HCT116 (cell line): ENCODE measurements at regions of chr4 and their contacts with region 1.

Region 1: DNA sequence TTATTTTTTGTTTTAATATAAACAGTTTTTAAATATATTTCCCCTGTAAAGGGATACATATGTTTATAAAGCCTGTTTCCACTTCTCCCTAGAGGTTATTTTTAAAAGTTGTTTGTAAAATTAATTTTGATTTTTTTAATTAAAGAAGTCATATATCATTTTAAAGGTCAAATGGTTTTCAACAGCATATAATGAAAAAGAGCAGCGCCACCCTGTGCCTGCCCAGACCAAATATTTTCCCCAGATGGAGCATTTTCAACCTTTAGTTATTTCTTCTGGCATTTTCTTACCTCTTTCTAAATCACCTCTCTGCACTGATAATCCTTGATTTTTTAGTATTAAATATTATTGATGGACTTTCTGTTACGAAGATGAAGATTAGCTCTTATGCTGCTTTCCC is 21.0 kb downstream of the MSX1 start:
- DNase-seq: no peak
- ATAC-seq: peak; percentile 54; the same call in 1 of the 2 replicates
- H3K4me3 ChIP-seq: no peak overlapping the region
- H3K27ac ChIP-seq: no peak overlapping the region
- H3K4me1 ChIP-seq: peaks cover 0 to 11% of the 10 kb centered on the region in 2 experiments; a peak in 1 of 4 replicates
- H3K27me3 ChIP-seq: no peaks in the 10 kb centered on the region
- CTCF ChIP-seq: peak; percentile 52 to 81 (median 57)
- POLR2A ChIP-seq: no peak
- RAD21 ChIP-seq: peak; percentile 75

Region 2: DNA sequence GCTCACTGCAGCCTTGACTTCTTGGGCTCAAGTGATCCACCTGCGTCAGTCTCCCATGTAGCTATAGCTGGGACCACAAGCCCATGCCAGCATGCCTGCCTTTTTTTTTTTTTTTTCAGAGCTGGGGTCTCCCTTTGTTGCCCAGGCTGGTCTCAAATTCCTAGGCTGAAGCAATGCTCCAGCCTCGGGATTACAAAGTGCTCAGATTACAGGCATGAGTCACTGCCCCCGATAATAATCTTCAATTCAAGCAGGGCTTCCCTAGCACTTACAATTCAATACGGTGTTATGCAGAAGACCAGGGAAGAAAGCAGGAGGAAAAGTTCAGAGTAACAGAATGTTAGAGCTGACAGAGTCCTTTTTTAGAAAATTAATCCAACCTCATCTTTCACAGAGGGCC is 679.9 kb before region 1 on chr4:
- CTCF ChIA-PET with region 1: no interaction called
- POLR2A ChIA-PET with region 1: no interaction called
- RAD21 ChIA-PET with region 1: no interaction called
- intact Hi-C with region 1: no loop called
- DNase-seq: no peak
- ATAC-seq: no peak
- H3K4me3 ChIP-seq: no peak overlapping the region
- H3K27ac ChIP-seq: no peak overlapping the region
- H3K4me1 ChIP-seq: peaks cover 3 to 5% of the 10 kb centered on the region in 2 experiments; a peak in 2 of 4 replicates
- H3K27me3 ChIP-seq: no peaks in the 10 kb centered on the region
- CTCF ChIP-seq: no peak
- POLR2A ChIP-seq: no peak
- RAD21 ChIP-seq: no peak

Region 3: GRCh38 chr4:4488405-4489404 is 391.8 kb before region 1 on chr4:
- CTCF ChIA-PET with region 1: interaction called, 6 read pairs
- POLR2A ChIA-PET with region 1: no interaction called
- RAD21 ChIA-PET with region 1: no interaction called
- intact Hi-C with region 1: loop called (anchors 1 kb)
- DNase-seq: peak; percentile 60
- ATAC-seq: peak; percentile 99
- H3K4me3 ChIP-seq: no peak overlapping the region
- H3K27ac ChIP-seq: no peak overlapping the region
- H3K4me1 ChIP-seq: no peaks in the 10 kb centered on the region
- H3K27me3 ChIP-seq: no peaks in the 10 kb centered on the region
- CTCF ChIP-seq: peak; percentile 60 to 94 (median 93); a peak in 5 of 6 replicates
- POLR2A ChIP-seq: no peak
- RAD21 ChIP-seq: peak; percentile 86

Region 4: GRCh38 chr4:4677556-4678522 is 202.7 kb before region 1 on chr4:
- CTCF ChIA-PET with region 1: interaction called, 4 read pairs
- POLR2A ChIA-PET with region 1: no interaction called
- RAD21 ChIA-PET with region 1: no interaction called
- intact Hi-C with region 1: loop called (anchors 1 kb)
- DNase-seq: peak; percentile 36
- ATAC-seq: peak; percentile 83
- H3K4me3 ChIP-seq: no peak overlapping the region
- H3K27ac ChIP-seq: no peak overlapping the region
- H3K4me1 ChIP-seq: peaks cover 5 to 11% of the 10 kb centered on the region in 2 experiments
- H3K27me3 ChIP-seq: no peaks in the 10 kb centered on the region
- CTCF ChIP-seq: peak; percentile 56 to 84 (median 80); a peak in 5 of 6 replicates
- POLR2A ChIP-seq: no peak
- RAD21 ChIP-seq: peak; percentile 78

Region 5: GRCh38 chr4:5322321-5322720 is 441.8 kb after region 1 on chr4:
- CTCF ChIA-PET with region 1: no interaction called
- POLR2A ChIA-PET with region 1: no interaction called
- RAD21 ChIA-PET with region 1: no interaction called
- intact Hi-C with region 1: no loop called
- DNase-seq: no peak
- ATAC-seq: no peak
- H3K4me3 ChIP-seq: no peak overlapping the region
- H3K27ac ChIP-seq: no peak overlapping the region
- H3K4me1 ChIP-seq: no peaks in the 10 kb centered on the region
- H3K27me3 ChIP-seq: 0 out of 2 replicates have a peak, but pooled peaks cover 4% of the 10 kb centered on the region
- CTCF ChIP-seq: no peak
- POLR2A ChIP-seq: no peak
- RAD21 ChIP-seq: no peak